ENCODE measurements at regions of chr17 and their contacts with region 1.

Region 1: GRCh38 chr17:80028030-80028429 is 7.6 kb downstream of the TBC1D16 start:
- DNase-seq: no peak
- ATAC-seq: no peak
- H3K4me3 ChIP-seq: no peak overlapping the region
- H3K27ac ChIP-seq: no peak overlapping the region
- H3K4me1 ChIP-seq: peaks cover 32% of the 10 kb centered on the region
- H3K27me3 ChIP-seq: no peaks in the 10 kb centered on the region
- CTCF ChIP-seq: no peak

Region 2: DNA sequence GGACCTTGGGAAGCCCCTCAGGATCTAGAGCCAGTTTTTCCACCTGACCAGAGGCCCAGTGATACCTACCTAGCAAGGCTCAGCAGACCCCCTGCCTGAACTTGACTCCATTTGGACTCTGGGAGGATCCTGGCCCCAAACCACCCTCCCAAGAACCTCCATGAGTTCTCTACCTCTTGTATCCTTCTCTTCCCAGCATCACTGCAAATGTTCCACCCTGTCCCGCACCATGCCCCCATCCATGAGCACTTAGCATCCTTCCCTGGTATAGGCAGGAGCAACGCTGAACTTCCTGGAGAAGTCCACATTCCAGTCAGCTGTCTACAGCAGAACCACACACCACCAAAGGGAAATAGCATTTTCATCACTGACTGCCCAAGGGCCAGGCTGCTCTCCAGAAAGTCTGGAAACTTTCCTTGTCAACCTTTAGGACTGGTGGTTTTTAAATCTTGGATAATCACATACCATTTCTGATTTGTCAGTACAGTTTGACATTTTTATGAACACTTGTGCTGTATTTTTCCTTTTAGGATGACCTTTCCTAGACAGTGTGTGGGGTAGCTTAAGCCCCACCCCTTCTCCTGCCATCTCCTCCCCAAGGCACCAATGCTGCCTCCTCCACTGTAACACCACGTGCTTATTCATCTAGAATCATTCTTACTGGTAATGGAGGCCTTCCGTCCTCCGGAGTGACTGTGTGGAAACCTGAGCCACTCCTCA is 105.0 kb after region 1 on chr17:
- CTCF ChIA-PET with region 1: no interaction called
- POLR2A ChIA-PET with region 1: no interaction called
- in situ Hi-C with region 1: no loop called
- intact Hi-C with region 1: no loop called
- DNase-seq: no peak
- ATAC-seq: peak; percentile 44; the same call in 1 of the 2 replicates
- H3K4me3 ChIP-seq: no peak overlapping the region
- H3K27ac ChIP-seq: no peak overlapping the region
- H3K4me1 ChIP-seq: no peaks in the 10 kb centered on the region
- H3K27me3 ChIP-seq: no peaks in the 10 kb centered on the region
- CTCF ChIP-seq: no peak

Region 3: GRCh38 chr17:80316927-80317702 is 289.1 kb after region 1 on chr17:
- CTCF ChIA-PET with region 1: no interaction called
- POLR2A ChIA-PET with region 1: no interaction called
- in situ Hi-C with region 1: no loop called
- intact Hi-C with region 1: no loop called
- DNase-seq: no peak
- ATAC-seq: peak; percentile 41
- H3K4me3 ChIP-seq: no peak overlapping the region
- H3K27ac ChIP-seq: no peak overlapping the region
- H3K4me1 ChIP-seq: no peaks in the 10 kb centered on the region
- H3K27me3 ChIP-seq: no peaks in the 10 kb centered on the region
- CTCF ChIP-seq: no peak

Region 4: GRCh38 chr17:80791758-80792284 is 763.8 kb after region 1 on chr17:
- CTCF ChIA-PET with region 1: no interaction called
- POLR2A ChIA-PET with region 1: interaction called, 11 read pairs
- in situ Hi-C with region 1: no loop called
- intact Hi-C with region 1: no loop called
- DNase-seq: peak; percentile 92
- ATAC-seq: peak; percentile 94
- H3K4me3 ChIP-seq: peak overlapping the region in 1 of 2 experiments; percentile 35; a peak in 3 of 4 replicates
- H3K27ac ChIP-seq: peak overlapping the region; percentile 96
- H3K4me1 ChIP-seq: peaks cover 46% of the 10 kb centered on the region
- H3K27me3 ChIP-seq: no peaks in the 10 kb centered on the region
- CTCF ChIP-seq: no peak

Measured in Panc1 (cell line).